ENCODE measurements at regions of chr12 and their contacts with region 1.

Region 1: DNA sequence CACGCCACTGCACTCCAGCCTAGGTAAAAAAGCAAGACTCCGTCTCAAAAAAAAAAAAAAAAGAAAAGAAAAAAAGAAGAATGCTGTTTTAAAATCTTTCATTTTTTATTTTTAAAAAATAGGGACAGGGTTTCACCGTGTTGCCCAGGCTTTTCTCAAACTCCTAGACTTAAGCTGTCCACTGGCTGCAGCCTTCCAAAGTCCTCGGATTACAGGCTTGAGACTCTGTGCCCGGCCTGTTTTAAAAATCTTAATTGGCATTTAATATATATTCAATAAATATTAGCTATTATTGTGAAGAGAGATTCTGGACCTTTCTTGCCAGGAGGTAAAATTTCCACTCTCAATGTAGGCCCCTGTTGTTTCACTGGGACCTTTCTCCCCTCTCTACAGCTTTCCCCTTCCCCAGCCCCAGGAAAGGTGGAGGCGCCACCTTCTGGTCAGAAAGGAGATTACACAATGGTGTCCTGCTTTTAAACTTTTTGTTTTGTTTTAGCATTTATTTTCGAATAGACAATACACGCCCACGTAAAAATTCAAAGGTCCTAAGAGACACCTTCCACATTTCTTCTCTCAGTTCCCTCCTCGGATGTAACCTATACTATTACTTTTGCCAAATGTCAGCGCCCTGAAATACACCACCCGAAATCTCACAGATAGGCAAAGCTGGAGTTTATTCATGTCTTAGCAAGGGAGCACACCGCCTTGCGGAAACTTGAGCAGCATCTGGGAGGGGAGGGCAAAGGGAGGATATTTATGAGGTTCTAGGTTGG is 23.8 kb upstream of the PHC1 start:
- DNase-seq: peak; percentile 10
- H3K4me3 ChIP-seq: peak overlapping the region; percentile 61
- H3K27ac ChIP-seq: no peak overlapping the region
- H3K27me3 ChIP-seq: no peaks in the 10 kb centered on the region
- CTCF ChIP-seq: peak; percentile 92

Region 2: GRCh38 chr12:8662593-8662992 is 227.9 kb before region 1 on chr12 and contains the start of gene MFAP5:
- CTCF ChIA-PET with region 1: interaction called, 73 read pairs
- POLR2A ChIA-PET with region 1: no interaction called
- DNase-seq: no peak
- H3K4me3 ChIP-seq: no peak within 1 kb of the TSS
- H3K27ac ChIP-seq: no peak within 1 kb of the TSS
- H3K27me3 ChIP-seq: peaks cover 3% of the 10 kb centered on the region
- CTCF ChIP-seq: no peak
- polyA plus RNA-seq, gene MFAP5: 0.36 and 0.60 TPM in 2 replicates

Region 3: GRCh38 chr12:8687846-8688601 is 202.5 kb before region 1 on chr12:
- CTCF ChIA-PET with region 1: interaction called, 138 read pairs
- POLR2A ChIA-PET with region 1: interaction called, 5 read pairs
- DNase-seq: peak; percentile 55
- H3K4me3 ChIP-seq: peak overlapping the region; percentile 1; the same call in 1 of the 2 replicates
- H3K27ac ChIP-seq: no peak overlapping the region
- H3K27me3 ChIP-seq: peaks cover 3% of the 10 kb centered on the region
- CTCF ChIP-seq: no peak

Region 4: GRCh38 chr12:8823565-8824300 is 66.8 kb before region 1 on chr12:
- CTCF ChIA-PET with region 1: interaction called, 17 read pairs
- POLR2A ChIA-PET with region 1: no interaction called
- DNase-seq: no peak
- H3K4me3 ChIP-seq: no peak overlapping the region
- H3K27ac ChIP-seq: no peak overlapping the region
- H3K27me3 ChIP-seq: no peaks in the 10 kb centered on the region
- CTCF ChIP-seq: peak; percentile 62

Region 5: DNA sequence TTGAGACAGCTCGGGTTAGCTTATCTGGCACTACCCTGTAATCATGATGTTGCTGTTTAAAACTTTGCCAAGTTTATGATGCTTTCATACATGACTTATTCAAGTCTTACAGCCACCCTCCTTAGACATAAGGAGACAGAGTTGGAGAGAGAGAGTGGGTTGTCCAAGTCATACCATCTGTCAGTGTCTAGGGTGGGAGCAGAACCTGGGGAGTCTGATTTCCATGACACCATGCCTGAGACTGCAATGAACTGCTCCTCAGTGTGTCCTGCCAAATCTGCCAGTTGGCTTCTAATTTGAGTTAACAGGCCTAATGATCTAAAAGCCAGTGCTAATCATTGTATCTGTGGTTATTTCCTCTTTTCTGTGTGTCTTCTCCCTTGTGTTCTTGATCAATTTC is 19.9 kb before region 1 on chr12:
- CTCF ChIA-PET with region 1: interaction called, 17 read pairs
- POLR2A ChIA-PET with region 1: no interaction called
- DNase-seq: no peak
- H3K4me3 ChIP-seq: no peak overlapping the region
- H3K27ac ChIP-seq: no peak overlapping the region
- H3K27me3 ChIP-seq: no peaks in the 10 kb centered on the region
- CTCF ChIP-seq: no peak

Region 6: GRCh38 chr12:8949342-8950220 is 59.1 kb after region 1 on chr12 and contains the start of gene M6PR:
- CTCF ChIA-PET with region 1: interaction called, 31 read pairs
- POLR2A ChIA-PET with region 1: no interaction called
- DNase-seq: peak; percentile 78
- H3K4me3 ChIP-seq: peak within 1 kb of the TSS; percentile 92
- H3K27ac ChIP-seq: peak within 1 kb of the TSS; percentile 99
- H3K27me3 ChIP-seq: no peaks in the 10 kb centered on the region
- CTCF ChIP-seq: peak; percentile 60
- polyA plus RNA-seq, gene M6PR: 106 and 119 TPM in 2 replicates

Region 7: GRCh38 chr12:9179781-9180180 is 289.3 kb after region 1 on chr12:
- CTCF ChIA-PET with region 1: no interaction called
- POLR2A ChIA-PET with region 1: no interaction called
- DNase-seq: no peak
- H3K4me3 ChIP-seq: no peak overlapping the region
- H3K27ac ChIP-seq: no peak overlapping the region
- H3K27me3 ChIP-seq: no peaks in the 10 kb centered on the region
- CTCF ChIP-seq: no peak

Region 8: GRCh38 chr12:9992296-9992695 is 1101.8 kb after region 1 on chr12:
- CTCF ChIA-PET with region 1: interaction called, 11 read pairs
- POLR2A ChIA-PET with region 1: no interaction called
- DNase-seq: no peak
- H3K4me3 ChIP-seq: no peak overlapping the region
- H3K27ac ChIP-seq: no peak overlapping the region
- H3K27me3 ChIP-seq: no peaks in the 10 kb centered on the region
- CTCF ChIP-seq: no peak